Activated CD4-positive, alpha-beta memory T cell treated with anti-CD3 and anti-CD28 coated beads for 36 hours (primary cell): ENCODE measurements at regions of chr1 and their contacts with region 1.

Region 1: GRCh38 chr1:153494976-153495535 is 34.6 kb upstream of the S100A7 start:
- DNase-seq: peak; percentile 83
- H3K4me3 Mint-ChIP-seq: no peak overlapping the region
- H3K27ac Mint-ChIP-seq: no peak overlapping the region
- H3K4me1 Mint-ChIP-seq: no peaks in the 10 kb centered on the region
- H3K27me3 Mint-ChIP-seq: peaks cover 21% of the 10 kb centered on the region

Region 2: DNA sequence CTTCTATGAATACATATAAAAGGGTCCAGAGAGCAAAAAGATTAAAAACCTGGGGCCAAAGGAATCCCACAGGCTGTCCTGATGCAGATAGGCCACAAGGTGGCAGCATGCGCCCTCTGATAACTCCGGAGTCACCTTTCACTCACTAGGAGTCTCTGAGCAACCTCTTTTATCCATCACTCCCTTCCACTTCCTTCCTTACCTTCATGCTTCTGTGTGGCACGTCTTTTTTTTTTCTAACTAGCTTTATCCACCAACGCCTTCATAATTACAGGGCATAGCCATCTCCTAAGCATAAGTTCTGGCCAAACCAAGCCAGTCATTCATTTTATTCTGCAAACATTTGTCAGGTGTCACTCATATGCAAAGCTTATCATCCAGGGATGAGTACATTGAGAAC is 142.5 kb before region 1 on chr1:
- CTCF ChIA-PET with region 1: interaction called, 186 read pairs
- POLR2A ChIA-PET with region 1: interaction called, 3 read pairs
- intact Hi-C with region 1: loop called (anchors 1 kb)
- DNase-seq: peak; percentile 75
- H3K4me3 Mint-ChIP-seq: no peak overlapping the region
- H3K27ac Mint-ChIP-seq: no peak overlapping the region
- H3K4me1 Mint-ChIP-seq: peaks cover 6% of the 10 kb centered on the region
- H3K27me3 Mint-ChIP-seq: peaks cover 7% of the 10 kb centered on the region

Region 3: GRCh38 chr1:153465811-153466636 is 29.0 kb before region 1 on chr1:
- CTCF ChIA-PET with region 1: interaction called, 33 read pairs
- POLR2A ChIA-PET with region 1: no interaction called
- intact Hi-C with region 1: loop called (anchors 1 kb)
- DNase-seq: peak; percentile 77
- H3K4me3 Mint-ChIP-seq: no peak overlapping the region
- H3K27ac Mint-ChIP-seq: no peak overlapping the region
- H3K4me1 Mint-ChIP-seq: no peaks in the 10 kb centered on the region
- H3K27me3 Mint-ChIP-seq: peaks cover 21% of the 10 kb centered on the region

Region 4: DNA sequence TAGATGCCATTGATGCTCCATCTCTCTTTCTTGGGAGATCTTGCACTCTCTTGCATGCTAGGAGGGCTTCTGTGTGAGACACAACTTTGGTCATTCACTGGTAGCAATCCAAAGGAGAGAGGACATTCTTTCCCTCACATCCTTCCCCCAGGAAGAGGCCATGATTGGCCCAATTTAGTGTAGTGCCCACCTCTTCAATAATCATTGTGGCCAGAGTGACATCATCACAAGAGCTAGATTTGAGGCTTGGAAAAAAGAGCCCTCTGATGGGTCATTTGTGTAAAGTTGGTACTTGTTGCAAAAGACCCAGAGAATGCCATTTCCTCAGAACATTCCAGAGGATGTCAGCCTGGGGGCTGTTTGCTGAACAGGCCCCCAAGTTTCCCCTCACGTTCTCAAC is 10.5 kb after region 1 on chr1:
- CTCF ChIA-PET with region 1: interaction called, 13 read pairs
- POLR2A ChIA-PET with region 1: no interaction called
- intact Hi-C with region 1: no loop called
- DNase-seq: no peak
- H3K4me3 Mint-ChIP-seq: no peak overlapping the region
- H3K27ac Mint-ChIP-seq: no peak overlapping the region
- H3K4me1 Mint-ChIP-seq: peaks cover under 1% of the 10 kb centered on the region
- H3K27me3 Mint-ChIP-seq: no peaks in the 10 kb centered on the region

Region 5: DNA sequence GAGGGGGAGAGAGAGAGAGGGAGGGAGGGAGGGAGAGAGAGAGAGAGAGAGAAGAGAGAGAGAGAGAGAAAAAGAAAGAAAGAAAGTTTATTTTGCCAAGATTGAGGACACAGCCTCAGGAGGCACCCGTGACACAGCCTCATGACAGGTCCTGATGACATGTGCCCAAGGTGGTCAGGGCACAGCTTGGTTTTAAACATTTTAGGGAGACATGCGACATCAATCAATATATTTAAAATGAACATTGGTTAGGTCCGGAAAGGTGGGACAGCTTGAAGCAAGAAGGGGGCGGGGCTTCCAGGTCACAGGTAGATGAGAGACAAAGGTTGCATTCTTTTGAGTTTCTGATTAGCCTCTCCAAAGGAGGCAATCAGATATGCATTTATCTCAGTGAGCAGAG is 25.2 kb after region 1 on chr1:
- CTCF ChIA-PET with region 1: interaction called, 16 read pairs
- POLR2A ChIA-PET with region 1: no interaction called
- intact Hi-C with region 1: no loop called
- DNase-seq: no peak
- H3K4me3 Mint-ChIP-seq: no peak overlapping the region
- H3K27ac Mint-ChIP-seq: no peak overlapping the region
- H3K4me1 Mint-ChIP-seq: peaks cover 8% of the 10 kb centered on the region
- H3K27me3 Mint-ChIP-seq: no peaks in the 10 kb centered on the region